Naive thymus-derived CD4-positive, alpha-beta T cell (primary cell): ENCODE measurements at regions of chr16 and their contacts with region 1.

Region 1: GRCh38 chr16:30491744-30492308 is 19.3 kb downstream of the ITGAL start:
- DNase-seq: peak in 4 of 9 donors; percentile 12 to 22 (median 16)
- ATAC-seq: no peak
- H3K4me3 ChIP-seq: no peak overlapping the region
- H3K4me3 Mint-ChIP-seq: peak overlapping the region in 4 of 10 donors; percentile 26 to 62 (median 35)
- H3K27ac ChIP-seq: peak overlapping the region; percentile 34
- H3K27ac Mint-ChIP-seq: peak overlapping the region; percentile 58 to 92 (median 77)
- H3K4me1 ChIP-seq: peaks cover 0 to 7% of the 10 kb centered on the region in 2 donors
- H3K4me1 Mint-ChIP-seq: peaks cover 16 to 43% (median 21%) of the 10 kb centered on the region in 7 donors
- H3K27me3 ChIP-seq: no peaks in the 10 kb centered on the region
- H3K27me3 Mint-ChIP-seq: no peaks in the 10 kb centered on the region

Region 2: GRCh38 chr16:30378236-30379204 is 113.3 kb before region 1 on chr16:
- CTCF ChIA-PET with region 1: no interaction called
- POLR2A ChIA-PET with region 1: no interaction called
- intact Hi-C with region 1: no loop called
- DNase-seq: peak; percentile 97 to 99 (median 99)
- ATAC-seq: peak; percentile 91
- H3K4me3 ChIP-seq: peak overlapping the region; percentile 88
- H3K4me3 Mint-ChIP-seq: peak overlapping the region; percentile 90 to 100 (median 97)
- H3K27ac ChIP-seq: peak overlapping the region; percentile 100
- H3K27ac Mint-ChIP-seq: peak overlapping the region; percentile 98 to 100 (median 100)
- H3K4me1 ChIP-seq: peaks cover 54 to 56% of the 10 kb centered on the region in 2 donors
- H3K4me1 Mint-ChIP-seq: peaks cover 32 to 61% (median 49%) of the 10 kb centered on the region in 7 donors
- H3K27me3 ChIP-seq: no peaks in the 10 kb centered on the region
- H3K27me3 Mint-ChIP-seq: no peaks in the 10 kb centered on the region

Region 3: GRCh38 chr16:30472328-30472942 is 19.4 kb before region 1 on chr16 and contains the start of gene ITGAL:
- CTCF ChIA-PET with region 1: interaction called, 3 read pairs
- POLR2A ChIA-PET with region 1: interaction called, 5 read pairs
- intact Hi-C with region 1: loop called in 1 of 2 experiments (anchors 1 kb)
- DNase-seq: peak; percentile 41 to 89 (median 84)
- ATAC-seq: peak; percentile 89
- H3K4me3 ChIP-seq: peak within 1 kb of the TSS; percentile 74
- H3K4me3 Mint-ChIP-seq: peak within 1 kb of the TSS; percentile 83 to 100 (median 98)
- H3K27ac ChIP-seq: peak within 1 kb of the TSS; percentile 84
- H3K27ac Mint-ChIP-seq: peak within 1 kb of the TSS; percentile 88 to 98 (median 96)
- H3K4me1 ChIP-seq: peaks cover 60 to 63% of the 10 kb centered on the region in 2 donors
- H3K4me1 Mint-ChIP-seq: peaks cover 43 to 83% (median 57%) of the 10 kb centered on the region in 7 donors
- H3K27me3 ChIP-seq: no peaks in the 10 kb centered on the region
- H3K27me3 Mint-ChIP-seq: no peaks in the 10 kb centered on the region
- total RNA-seq, gene ITGAL: 258 to 629 (median 436) TPM